BJ (cell line): ENCODE measurements at regions of chr3 and their contacts with region 1.

Region 1: DNA sequence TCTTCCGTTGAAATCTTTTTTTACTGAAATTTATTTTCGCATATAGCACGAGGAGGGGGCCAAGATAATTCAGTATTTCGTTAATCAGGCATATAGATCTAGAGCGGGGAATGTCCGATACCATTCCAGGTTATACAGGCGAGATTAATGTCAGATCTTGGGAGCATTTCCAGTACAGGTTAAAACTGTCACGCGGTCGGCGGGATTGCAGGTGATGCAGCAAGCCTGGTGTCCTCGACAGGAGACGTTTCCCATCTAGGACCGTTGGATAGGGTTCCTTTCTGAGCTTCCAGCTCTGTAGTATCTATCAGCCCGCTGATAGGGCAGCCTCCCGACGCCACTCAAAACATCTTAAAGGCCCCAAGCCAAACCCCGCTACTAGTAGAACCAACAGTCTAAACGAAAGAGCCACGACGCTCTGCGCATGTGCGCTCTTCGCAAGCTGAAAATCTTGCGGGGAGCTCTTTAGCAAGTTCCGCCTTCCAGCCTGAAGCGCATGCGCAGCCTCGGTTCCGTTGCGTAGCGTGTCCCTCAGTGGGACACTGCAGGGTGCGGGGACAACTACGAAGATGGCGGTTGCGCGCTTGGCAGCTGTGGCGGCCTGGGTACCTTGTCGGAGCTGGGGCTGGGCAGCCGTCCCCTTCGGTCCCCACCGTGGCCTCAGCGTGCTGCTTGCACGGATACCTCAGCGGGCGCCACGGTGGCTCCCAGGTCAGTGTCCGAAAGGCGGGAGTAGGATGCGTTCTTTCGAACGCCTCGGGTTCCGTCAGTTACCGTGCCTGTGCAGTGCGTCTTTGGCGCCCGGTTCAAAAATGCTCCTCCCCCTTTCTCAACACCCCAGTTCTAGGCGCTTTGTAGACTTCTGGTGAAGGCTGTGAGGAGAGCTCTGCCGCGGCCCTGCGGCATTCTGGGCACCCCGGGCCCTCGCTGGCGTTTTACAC is at the start of gene ABHD10:
- DNase-seq: peak; percentile 95
- H3K4me3 ChIP-seq: peak within 1 kb of the TSS; percentile 78
- H3K27me3 ChIP-seq: no peaks in the 10 kb centered on the region
- CTCF ChIP-seq: no peak
- polyA plus RNA-seq, gene ABHD10: 12.6 and 21.1 TPM in 2 replicates

Region 2: GRCh38 chr3:111708157-111708771 is 270.5 kb before region 1 on chr3:
- CTCF ChIA-PET with region 1: interaction called, 3 read pairs
- POLR2A ChIA-PET with region 1: interaction called, 10 read pairs
- DNase-seq: no peak
- H3K4me3 ChIP-seq: no peak overlapping the region
- H3K27me3 ChIP-seq: no peaks in the 10 kb centered on the region
- CTCF ChIP-seq: no peak

Region 3: DNA sequence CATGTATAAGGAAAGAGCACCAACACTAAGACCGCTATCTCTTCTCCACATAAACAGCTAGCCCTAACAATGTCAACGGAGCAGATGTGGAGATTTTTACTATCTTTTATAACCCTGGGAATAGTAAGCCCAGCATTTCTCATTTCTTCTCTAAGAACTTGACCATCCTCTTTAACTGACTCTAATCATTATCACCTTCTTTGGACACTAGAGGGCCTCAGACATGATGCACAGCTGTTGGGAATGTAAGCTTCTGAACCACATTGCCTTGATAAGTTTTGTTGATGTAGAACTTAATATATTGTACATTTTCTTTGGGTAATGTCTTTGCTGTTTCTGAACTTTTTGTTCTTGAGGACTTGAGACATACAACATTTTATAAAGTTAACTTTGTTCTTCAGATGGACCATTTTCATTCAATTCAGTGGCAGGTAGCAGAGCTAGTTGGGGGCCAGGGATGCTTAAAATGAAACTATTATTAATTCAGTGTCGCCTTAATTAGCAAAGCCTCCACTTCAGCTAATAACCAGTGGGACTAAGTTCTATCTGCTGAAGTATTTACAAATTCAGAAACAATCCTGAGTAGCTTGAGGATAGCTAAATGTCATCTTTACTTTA is 10.4 kb after region 1 on chr3:
- CTCF ChIA-PET with region 1: interaction called, 34 read pairs
- POLR2A ChIA-PET with region 1: interaction called, 3 read pairs
- DNase-seq: peak; percentile 25
- H3K4me3 ChIP-seq: no peak overlapping the region
- H3K27me3 ChIP-seq: no peaks in the 10 kb centered on the region
- CTCF ChIP-seq: peak; percentile 79

Region 4: GRCh38 chr3:112117841-112118571 is 139.2 kb after region 1 on chr3:
- CTCF ChIA-PET with region 1: no interaction called
- POLR2A ChIA-PET with region 1: no interaction called
- DNase-seq: no peak
- H3K4me3 ChIP-seq: no peak overlapping the region
- H3K27me3 ChIP-seq: no peaks in the 10 kb centered on the region
- CTCF ChIP-seq: no peak